Activated CD8-positive, alpha-beta memory T cell treated with anti-CD3 and anti-CD28 coated beads, Interleukin-2, amount 10 ng/mL, durations not matched to agents 7 days and 5 days (primary cell): ENCODE measurements at regions of chr3 and their contacts with region 1.

Region 1: DNA sequence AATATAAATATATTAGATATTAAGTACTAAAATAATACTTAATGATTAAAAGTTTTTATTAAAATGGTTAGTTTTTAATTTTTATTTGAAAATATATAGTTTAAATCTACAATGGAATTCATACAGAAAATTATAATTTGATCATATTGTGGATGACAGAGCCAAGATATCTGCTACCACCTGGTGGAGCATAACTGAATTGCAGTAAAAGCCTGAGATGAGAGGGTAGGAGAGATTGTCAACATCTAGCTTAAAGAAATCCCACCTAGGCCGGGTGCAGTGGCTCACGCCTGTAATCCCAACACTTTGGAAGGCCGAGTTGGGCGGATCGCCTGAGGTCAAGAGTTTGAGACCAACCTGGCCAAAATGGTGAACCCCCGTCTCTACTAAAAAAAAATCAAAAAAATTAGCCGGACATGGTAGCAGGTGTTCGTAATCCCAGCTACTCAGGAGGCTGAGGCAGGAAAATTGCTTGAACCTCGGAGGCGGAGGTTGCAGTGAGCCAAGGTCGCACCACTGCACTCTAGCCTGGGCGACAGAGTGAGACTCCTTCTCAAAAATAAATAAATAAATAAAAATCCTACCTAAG is 25.1 kb upstream of the CSTA start:
- DNase-seq: peak; percentile 47
- ATAC-seq: no peak
- H3K4me3 Mint-ChIP-seq: no peak overlapping the region
- H3K27ac Mint-ChIP-seq: no peak overlapping the region
- H3K4me1 Mint-ChIP-seq: peaks cover 15% of the 10 kb centered on the region
- H3K27me3 Mint-ChIP-seq: no peaks in the 10 kb centered on the region

Region 2: DNA sequence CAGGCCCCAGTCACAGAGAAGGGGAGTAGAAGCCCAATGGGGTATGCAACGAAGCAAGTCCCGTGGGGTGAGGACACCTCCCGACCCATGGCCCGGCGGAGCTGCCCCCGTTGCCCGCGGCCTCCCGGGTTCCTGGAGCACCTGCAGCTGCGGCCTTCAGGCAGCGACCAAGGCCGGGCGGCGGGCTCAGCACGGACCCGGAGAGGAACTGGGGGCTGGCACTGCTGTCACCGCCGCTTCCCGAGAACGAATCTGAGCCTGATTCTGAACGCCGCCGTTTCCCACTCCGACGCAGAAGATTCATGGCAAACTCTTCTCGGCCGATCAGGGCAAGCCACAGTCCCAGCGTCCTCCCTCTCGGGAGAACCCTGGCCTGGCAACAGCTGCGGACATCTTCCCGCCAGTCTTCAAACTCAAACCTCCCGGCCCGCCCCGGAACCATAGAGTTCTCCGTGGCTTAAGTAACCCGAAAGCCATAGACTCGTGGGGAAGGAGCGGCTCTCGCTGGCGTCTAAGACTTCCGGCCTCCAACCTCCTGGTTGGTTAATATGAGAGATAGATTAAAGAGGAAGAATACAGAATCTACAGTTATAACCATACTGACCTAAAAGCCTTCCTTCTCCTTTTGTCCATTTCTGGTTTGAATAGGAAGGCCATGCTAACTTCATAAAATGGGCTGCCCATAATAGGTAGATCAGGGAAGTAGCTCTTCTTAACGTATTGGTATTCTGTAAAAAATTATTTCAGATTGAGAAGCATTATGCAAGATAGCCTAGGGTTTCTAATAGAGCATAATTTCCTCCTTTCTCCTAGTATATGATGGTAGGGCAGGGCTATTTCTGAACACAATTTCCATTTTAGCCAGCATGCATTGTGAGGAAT is 754.2 kb before region 1 on chr3 and contains the start of gene POLQ:
- CTCF ChIA-PET with region 1: interaction called, 18 read pairs
- DNase-seq: peak; percentile 95
- ATAC-seq: peak; percentile 95
- H3K4me3 Mint-ChIP-seq: peak within 1 kb of the TSS; percentile 95
- H3K27ac Mint-ChIP-seq: peak within 1 kb of the TSS; percentile 95
- H3K4me1 Mint-ChIP-seq: peaks cover 34% of the 10 kb centered on the region
- H3K27me3 Mint-ChIP-seq: no peaks in the 10 kb centered on the region
- total RNA-seq, gene POLQ: 34.3 to 55.8 TPM